ENCODE measurements at regions of chr6 and their contacts with region 1.

Region 1: GRCh38 chr6:11653028-11653583 is 115.6 kb downstream of the TMEM170B start:
- DNase-seq: peak; percentile 89
- H3K4me3 ChIP-seq: no peak overlapping the region
- H3K27me3 ChIP-seq: no peaks in the 10 kb centered on the region
- CTCF ChIP-seq: no peak

Region 2: GRCh38 chr6:11585426-11586016 is 67.6 kb before region 1 on chr6:
- CTCF ChIA-PET with region 1: interaction called, 13 read pairs
- POLR2A ChIA-PET with region 1: no interaction called
- DNase-seq: no peak
- H3K4me3 ChIP-seq: no peak overlapping the region
- H3K27me3 ChIP-seq: no peaks in the 10 kb centered on the region
- CTCF ChIP-seq: peak; percentile 55

Region 3: DNA sequence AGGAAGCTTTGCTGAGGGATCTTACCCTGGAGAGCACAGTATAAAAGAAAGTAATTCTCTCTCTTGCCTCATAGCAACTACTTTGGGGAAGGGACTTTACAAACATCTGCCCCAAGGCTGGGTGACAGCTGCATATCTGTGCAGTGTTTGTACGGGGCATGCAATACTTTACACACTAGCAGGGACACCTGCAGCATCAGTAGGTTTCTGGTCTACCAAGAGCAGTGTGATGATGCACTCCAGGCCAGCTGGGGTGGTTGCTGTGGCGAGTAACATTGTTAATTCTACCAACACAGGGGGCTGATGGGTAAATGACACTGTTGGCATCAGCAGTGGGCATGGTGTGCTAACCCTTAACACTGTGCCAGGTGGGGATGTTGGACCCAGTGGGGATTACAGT is 77.5 kb after region 1 on chr6:
- CTCF ChIA-PET with region 1: no interaction called
- POLR2A ChIA-PET with region 1: no interaction called
- DNase-seq: no peak
- H3K4me3 ChIP-seq: no peak overlapping the region
- H3K27me3 ChIP-seq: no peaks in the 10 kb centered on the region; the same call in 1 of the 2 replicates
- CTCF ChIP-seq: no peak

Region 4: GRCh38 chr6:12081771-12082170 is 428.7 kb after region 1 on chr6:
- CTCF ChIA-PET with region 1: no interaction called
- POLR2A ChIA-PET with region 1: no interaction called
- DNase-seq: no peak
- H3K4me3 ChIP-seq: no peak overlapping the region
- H3K27me3 ChIP-seq: no peaks in the 10 kb centered on the region
- CTCF ChIP-seq: no peak

Region 5: DNA sequence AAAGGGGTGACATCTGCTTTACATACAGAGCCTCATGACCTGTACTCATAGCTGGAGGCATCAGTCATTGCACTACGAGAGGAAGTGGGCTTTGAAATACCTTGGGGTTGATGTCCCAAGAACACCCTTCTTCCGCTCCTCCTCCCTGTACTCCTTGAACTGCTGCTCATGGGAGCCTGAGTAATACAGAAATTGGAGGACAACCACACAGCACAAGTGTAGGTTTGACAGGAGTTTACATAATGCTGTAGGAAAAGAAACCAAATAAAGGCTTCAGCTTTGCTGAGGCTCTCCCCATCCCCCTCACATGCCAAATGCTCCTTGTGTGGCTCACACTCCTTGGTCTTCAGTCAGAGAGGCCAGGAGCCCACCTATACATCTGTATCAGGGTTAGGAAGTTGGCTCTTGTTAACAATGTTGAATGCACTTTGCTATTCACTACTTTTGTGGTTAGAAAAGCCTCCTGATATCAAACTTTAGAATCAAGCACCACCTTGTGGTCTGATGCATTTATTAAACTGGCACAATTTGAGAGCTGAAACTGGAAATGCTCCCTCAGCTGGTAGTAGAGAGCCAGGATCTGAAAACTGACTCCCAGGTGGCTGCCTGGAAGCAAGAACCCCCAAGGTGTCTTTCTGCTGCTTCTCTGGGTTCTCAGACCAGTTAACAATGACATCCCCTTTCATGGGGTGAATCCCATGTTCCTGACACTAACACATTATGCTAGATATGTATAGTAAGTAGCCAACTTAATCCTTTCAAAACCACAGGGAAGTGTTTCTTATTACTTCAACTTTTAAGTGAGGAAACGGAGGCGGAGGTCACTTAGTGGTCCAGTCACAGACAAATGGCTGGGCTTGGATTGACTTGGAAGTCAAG is 580.8 kb after region 1 on chr6:
- CTCF ChIA-PET with region 1: interaction called, 35 read pairs
- POLR2A ChIA-PET with region 1: no interaction called
- DNase-seq: peak; percentile 40
- H3K4me3 ChIP-seq: no peak overlapping the region
- H3K27me3 ChIP-seq: no peaks in the 10 kb centered on the region
- CTCF ChIP-seq: peak; percentile 86

Region 6: GRCh38 chr6:12289933-12290820 is 637.1 kb after region 1 on chr6 and contains the start of gene EDN1:
- CTCF ChIA-PET with region 1: interaction called, 94 read pairs
- POLR2A ChIA-PET with region 1: no interaction called
- DNase-seq: no peak
- H3K4me3 ChIP-seq: peak within 1 kb of the TSS; percentile 58
- H3K27me3 ChIP-seq: no peaks in the 10 kb centered on the region
- CTCF ChIP-seq: peak; percentile 76
- polyA plus RNA-seq, gene EDN1: 3.2 and 4.0 TPM in 2 replicates

Region 7: DNA sequence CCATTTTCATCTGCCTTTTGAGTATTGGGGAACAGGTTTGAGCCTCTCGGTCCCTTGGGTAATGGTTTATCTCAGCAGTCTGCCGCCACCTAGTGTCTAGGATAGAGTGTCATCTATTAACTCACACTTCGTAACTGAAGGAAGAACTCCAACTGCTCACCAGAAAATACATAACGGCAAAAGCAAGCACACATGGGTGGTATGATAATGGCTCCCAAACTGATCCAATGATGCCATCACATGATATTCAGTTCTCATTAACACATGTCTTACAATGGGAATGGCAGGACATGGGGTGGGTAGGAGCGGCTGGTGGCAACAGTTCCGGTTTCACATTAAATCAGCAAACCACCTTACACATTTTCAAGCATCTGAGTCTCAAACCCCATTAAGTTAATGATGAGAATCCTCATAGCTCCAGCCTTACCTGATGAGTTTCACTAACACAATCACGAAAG is 952.8 kb after region 1 on chr6:
- CTCF ChIA-PET with region 1: interaction called, 13 read pairs
- POLR2A ChIA-PET with region 1: no interaction called
- DNase-seq: no peak
- H3K4me3 ChIP-seq: no peak overlapping the region
- H3K27me3 ChIP-seq: no peaks in the 10 kb centered on the region
- CTCF ChIP-seq: peak; percentile 82

Measured in BJ (cell line).